ENCODE measurements at regions of chr17 and their contacts with region 1.

Region 1: DNA sequence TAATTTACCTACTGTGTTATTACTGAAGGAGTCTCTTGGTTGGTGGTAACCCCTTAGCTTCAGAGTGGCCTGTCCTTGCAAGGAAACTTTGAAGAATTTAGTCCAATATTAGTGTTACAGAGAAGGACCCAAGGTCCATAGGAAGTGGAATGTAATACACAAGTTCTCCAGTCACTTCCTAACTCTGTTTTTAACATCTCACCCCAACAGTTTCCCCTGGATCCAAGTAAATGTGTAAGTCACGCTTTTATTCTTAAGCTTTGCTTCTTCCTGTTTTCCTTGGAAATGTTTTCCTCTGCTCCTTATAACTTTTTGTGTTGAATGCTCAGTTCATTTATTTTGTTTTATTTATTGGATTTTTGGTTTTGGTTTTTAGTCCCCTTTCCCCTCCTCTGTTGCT is 25.9 kb upstream of the RPRML start:
- DNase-seq: no peak
- ATAC-seq: no peak
- H3K4me3 ChIP-seq: no peak overlapping the region
- H3K4me3 Mint-ChIP-seq: no peak overlapping the region
- H3K27ac ChIP-seq: no peak overlapping the region
- H3K27ac Mint-ChIP-seq: no peak overlapping the region
- H3K4me1 ChIP-seq: peaks cover 3% of the 10 kb centered on the region
- H3K4me1 Mint-ChIP-seq: no peaks in the 10 kb centered on the region
- H3K27me3 ChIP-seq: no peaks in the 10 kb centered on the region
- H3K27me3 Mint-ChIP-seq: no peaks in the 10 kb centered on the region
- CTCF ChIP-seq: no peak

Region 2: GRCh38 chr17:46782250-46782953 is 222.5 kb before region 1 on chr17:
- CTCF ChIA-PET with region 1: no interaction called
- POLR2A ChIA-PET with region 1: no interaction called
- intact Hi-C with region 1: no loop called
- DNase-seq: peak in 2 of 14 experiments; percentile 4 to 20
- ATAC-seq: no peak
- H3K4me3 ChIP-seq: no peak overlapping the region
- H3K4me3 Mint-ChIP-seq: no peak overlapping the region
- H3K27ac ChIP-seq: no peak overlapping the region
- H3K27ac Mint-ChIP-seq: no peak overlapping the region
- H3K4me1 ChIP-seq: no peaks in the 10 kb centered on the region
- H3K4me1 Mint-ChIP-seq: no peaks in the 10 kb centered on the region
- H3K27me3 ChIP-seq: no peaks in the 10 kb centered on the region
- H3K27me3 Mint-ChIP-seq: peaks cover 7% of the 10 kb centered on the region
- CTCF ChIP-seq: no peak

Region 3: DNA sequence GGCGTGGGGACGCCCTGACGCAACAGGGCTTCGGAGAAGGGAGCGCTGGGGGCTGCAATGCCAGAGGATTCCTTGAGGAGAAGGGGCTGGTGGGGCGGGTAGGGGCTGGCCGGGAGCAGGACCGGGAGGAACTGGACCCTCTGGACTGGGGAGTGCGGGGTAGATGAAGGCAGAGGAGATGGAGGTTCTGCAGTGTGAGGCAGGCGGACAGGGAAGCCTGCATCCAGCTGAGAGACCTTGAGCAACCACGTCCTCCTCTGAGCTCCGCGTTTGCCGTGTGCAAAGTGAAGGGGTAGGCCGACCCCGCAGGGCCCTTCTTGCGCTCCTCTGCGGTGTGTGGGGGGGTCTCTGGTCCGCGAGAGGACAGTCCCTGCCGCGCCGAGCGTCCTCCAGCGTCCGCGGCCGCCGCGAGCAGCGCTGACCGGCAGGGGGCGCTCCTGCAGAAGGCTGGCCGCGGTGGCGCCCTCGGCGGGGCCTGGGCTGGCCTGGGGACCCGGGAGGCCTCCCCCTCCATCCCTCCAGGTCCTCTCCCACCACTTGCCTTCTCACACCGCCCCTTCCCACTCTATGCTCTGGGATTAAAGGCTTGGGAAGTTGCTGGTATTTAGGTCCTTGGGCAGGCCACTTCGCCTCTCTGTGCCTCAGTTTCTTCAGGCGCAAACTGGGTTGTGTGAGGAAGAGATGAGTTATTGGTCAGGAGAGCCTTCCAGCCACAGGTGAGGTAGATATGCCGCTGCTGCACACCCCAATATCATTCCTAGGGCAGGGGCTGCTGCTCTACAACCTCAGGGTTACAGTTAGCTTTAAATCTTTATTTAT is 163.1 kb before region 1 on chr17:
- CTCF ChIA-PET with region 1: no interaction called
- POLR2A ChIA-PET with region 1: no interaction called
- intact Hi-C with region 1: loop called in 1 of 2 experiments (anchors 5 kb)
- DNase-seq: peak in 3 of 14 experiments; percentile 20 to 54 (median 47)
- ATAC-seq: peak; percentile 24
- H3K4me3 ChIP-seq: no peak overlapping the region
- H3K4me3 Mint-ChIP-seq: no peak overlapping the region
- H3K27ac ChIP-seq: no peak overlapping the region
- H3K27ac Mint-ChIP-seq: no peak overlapping the region
- H3K4me1 ChIP-seq: peaks cover 7% of the 10 kb centered on the region
- H3K4me1 Mint-ChIP-seq: no peaks in the 10 kb centered on the region
- H3K27me3 ChIP-seq: peaks cover 18 to 26% of the 10 kb centered on the region in 2 experiments
- H3K27me3 Mint-ChIP-seq: peaks cover 63% of the 10 kb centered on the region
- CTCF ChIP-seq: peak; percentile 57

Region 4: GRCh38 chr17:46984892-46985291 is 20.0 kb before region 1 on chr17:
- CTCF ChIA-PET with region 1: no interaction called
- POLR2A ChIA-PET with region 1: no interaction called
- intact Hi-C with region 1: no loop called
- DNase-seq: no peak
- ATAC-seq: no peak
- H3K4me3 ChIP-seq: no peak overlapping the region
- H3K4me3 Mint-ChIP-seq: no peak overlapping the region
- H3K27ac ChIP-seq: no peak overlapping the region
- H3K27ac Mint-ChIP-seq: no peak overlapping the region
- H3K4me1 ChIP-seq: no peaks in the 10 kb centered on the region
- H3K4me1 Mint-ChIP-seq: peaks cover 5% of the 10 kb centered on the region
- H3K27me3 ChIP-seq: peaks cover 5 to 9% of the 10 kb centered on the region in 2 experiments
- H3K27me3 Mint-ChIP-seq: peaks cover 24% of the 10 kb centered on the region
- CTCF ChIP-seq: no peak

Region 5: DNA sequence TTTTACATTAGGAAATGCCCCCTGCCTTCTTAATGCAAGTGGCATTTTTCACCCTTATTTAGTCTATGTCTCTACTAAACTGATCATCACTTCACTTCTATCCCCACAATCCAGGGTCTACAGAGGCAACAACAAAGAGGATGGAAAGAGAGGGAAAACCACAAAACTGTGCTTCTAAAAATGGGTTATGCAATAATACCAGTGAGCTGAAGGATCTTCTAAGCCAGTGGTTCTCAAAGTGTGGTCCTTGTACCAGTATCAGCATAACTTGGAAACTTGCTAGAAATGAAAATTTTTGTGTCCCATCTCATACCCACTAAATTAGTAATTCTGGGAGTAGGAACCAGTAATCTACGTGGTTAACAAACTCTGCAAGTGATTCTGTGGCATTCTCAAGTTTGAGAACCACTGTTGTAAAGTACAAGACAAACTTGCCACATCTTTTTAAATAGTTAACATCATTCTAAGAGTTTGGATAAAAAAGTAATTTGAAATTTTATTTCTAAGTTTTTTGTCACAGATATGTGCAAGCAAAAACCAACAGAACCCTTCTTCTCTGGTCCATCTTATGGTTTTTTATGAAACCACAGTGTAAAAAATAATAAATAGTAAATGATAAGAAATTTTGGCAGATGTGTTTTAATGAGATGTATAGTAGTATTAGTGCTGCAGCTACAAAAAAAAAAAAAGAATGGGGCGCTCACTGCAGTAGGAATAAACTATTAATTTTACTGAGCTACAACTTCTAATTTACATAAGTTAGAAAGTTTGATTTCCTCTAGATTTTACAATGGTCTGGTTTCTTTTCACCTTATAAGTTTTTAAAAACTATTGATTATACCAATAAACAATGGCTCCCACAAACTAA is 168.0 kb after region 1 on chr17:
- CTCF ChIA-PET with region 1: no interaction called
- POLR2A ChIA-PET with region 1: no interaction called
- intact Hi-C with region 1: no loop called
- DNase-seq: no peak
- ATAC-seq: no peak
- H3K4me3 ChIP-seq: no peak overlapping the region
- H3K4me3 Mint-ChIP-seq: no peak overlapping the region
- H3K27ac ChIP-seq: no peak overlapping the region
- H3K27ac Mint-ChIP-seq: peak overlapping the region; percentile 40
- H3K4me1 ChIP-seq: peaks cover 14% of the 10 kb centered on the region
- H3K4me1 Mint-ChIP-seq: peaks cover 37% of the 10 kb centered on the region
- H3K27me3 ChIP-seq: no peaks in the 10 kb centered on the region
- H3K27me3 Mint-ChIP-seq: no peaks in the 10 kb centered on the region
- CTCF ChIP-seq: no peak